Heart left ventricle (tissue), 16 donors: ENCODE measurements at regions of chr2 and their contacts with region 1.

Region 1: DNA sequence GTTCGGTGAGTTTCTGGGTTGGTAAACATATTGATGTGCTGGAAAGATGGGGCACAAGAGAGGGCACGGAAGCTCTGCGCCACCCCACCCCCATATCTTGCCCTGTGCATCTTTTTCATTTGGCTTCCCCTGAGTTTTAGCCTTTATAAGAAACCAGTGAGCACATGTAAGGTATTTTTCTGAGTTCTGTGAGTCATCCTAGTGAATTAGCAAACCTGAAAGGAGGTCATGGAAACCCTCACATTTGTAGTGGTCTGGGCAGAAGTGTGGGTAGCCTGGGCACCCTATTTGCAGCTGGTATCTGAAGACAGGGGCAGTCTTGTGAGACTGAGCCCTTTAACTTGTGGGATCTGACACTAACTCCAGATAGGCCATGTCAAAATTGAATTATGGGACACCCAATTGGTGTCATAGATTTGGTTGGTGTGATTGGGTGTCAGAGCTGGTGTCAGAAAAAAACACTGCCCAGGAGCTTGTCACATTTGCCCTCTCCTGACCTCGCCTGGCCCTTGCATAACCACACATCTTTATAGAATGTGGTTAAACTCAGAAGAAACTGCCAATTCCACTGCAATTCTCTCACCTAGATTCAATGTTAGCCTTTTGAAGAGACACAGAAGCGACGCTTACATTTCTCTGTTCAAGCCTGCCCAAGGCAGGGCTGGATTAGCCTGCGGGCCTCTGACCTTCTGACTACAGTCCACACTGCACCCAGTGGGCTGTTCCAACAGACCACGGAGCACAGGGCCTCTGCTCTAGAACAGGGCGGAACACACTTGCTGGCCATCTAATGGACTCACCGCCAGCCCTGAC is 12.0 kb upstream of the GALM start:
- DNase-seq: no peak
- ATAC-seq: no peak
- H3K4me3 ChIP-seq: no peak overlapping the region
- H3K27ac ChIP-seq: peak overlapping the region in 1 of 12 donors; percentile 90
- H3K4me1 ChIP-seq: peaks cover 0 to 56% (median 0%) of the 10 kb centered on the region in 12 donors
- H3K27me3 ChIP-seq: no peaks in the 10 kb centered on the region
- CTCF ChIP-seq: no peak
- POLR2A ChIP-seq: no peak

Region 2: GRCh38 chr2:38619458-38620164 is 34.3 kb before region 1 on chr2:
- intact Hi-C with region 1: loop called in 1 of 10 experiments (anchors 5 kb)
- DNase-seq: no peak
- ATAC-seq: peak in 3 of 4 donors; percentile 49 to 58 (median 51)
- H3K4me3 ChIP-seq: no peak overlapping the region
- H3K27ac ChIP-seq: peak overlapping the region in 5 of 12 donors; percentile 13 to 76 (median 57)
- H3K4me1 ChIP-seq: peaks cover 0 to 48% (median 7%) of the 10 kb centered on the region in 12 donors
- H3K27me3 ChIP-seq: no peaks in the 10 kb centered on the region
- CTCF ChIP-seq: no peak
- POLR2A ChIP-seq: no peak

Region 3: DNA sequence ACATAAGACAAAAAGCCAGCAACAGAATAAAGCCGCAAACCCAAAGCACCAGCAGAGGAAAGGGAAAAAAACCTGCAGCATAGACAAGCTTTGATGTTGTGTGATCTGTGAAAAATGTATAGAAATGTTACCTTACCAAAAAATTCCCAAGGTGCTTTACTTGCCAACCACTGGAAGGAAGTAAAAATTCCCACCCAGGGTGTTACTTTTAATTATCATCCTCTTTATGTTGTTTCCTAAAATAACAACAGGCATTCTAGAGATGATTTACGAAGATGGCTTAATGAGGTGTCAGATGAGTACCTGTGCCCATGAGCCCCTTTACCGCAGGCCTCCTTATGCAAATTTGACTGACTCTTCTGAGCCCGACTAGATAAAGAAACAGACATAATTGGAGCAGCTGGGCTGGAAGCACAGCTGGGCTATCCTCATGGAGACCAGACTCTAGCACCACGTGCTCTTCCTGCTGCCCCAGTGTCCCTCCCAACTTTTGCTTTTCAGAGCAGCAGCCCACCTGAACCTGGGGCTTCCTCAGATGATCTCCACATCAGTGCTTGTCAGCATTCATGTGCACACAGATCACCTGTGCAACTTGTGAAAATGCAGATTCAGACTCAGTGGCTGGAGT is 55.8 kb after region 1 on chr2:
- intact Hi-C with region 1: loop called in 1 of 10 experiments (anchors 10 kb)
- DNase-seq: no peak
- ATAC-seq: no peak
- H3K4me3 ChIP-seq: no peak overlapping the region
- H3K27ac ChIP-seq: no peak overlapping the region
- H3K4me1 ChIP-seq: peaks cover 0 to 8% (median 0%) of the 10 kb centered on the region in 12 donors
- H3K27me3 ChIP-seq: no peaks in the 10 kb centered on the region
- CTCF ChIP-seq: no peak
- POLR2A ChIP-seq: no peak